Heart right ventricle (tissue), 16 donors: ENCODE measurements at regions of chr14 and their contacts with region 1.

Region 1: DNA sequence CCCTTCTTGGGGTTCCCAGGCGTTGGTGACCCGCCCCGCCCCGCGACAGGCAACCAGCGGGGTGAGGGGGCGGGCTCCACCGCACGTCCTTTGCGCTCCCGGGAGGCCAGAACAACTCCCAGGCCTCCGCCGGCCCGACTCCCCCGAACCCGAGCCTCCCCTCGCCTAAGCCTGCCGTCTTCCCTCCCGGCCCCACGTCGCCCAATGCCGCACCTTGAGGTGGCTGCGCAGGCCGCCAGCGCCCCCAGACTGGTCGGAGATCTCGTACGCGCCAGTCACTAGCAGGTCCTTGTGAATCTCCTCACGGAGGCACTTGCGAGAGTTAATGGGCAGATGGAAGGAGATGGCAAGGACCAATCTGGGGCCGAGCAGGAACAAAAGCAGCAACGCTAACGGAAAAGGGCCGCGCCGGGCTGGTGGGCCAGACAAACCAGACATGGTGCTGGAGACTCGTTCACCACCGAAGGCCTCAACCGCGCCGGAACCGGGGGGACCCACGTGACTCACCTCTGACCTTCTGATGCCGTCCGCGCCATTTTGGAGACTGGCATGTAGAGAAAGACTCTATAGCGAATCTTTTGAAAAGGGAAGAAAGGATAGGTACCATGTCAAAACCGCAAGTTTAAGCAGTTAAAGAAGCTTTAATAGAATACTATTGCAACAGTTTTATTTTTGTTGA is at the start of gene TMED10:
- DNase-seq: peak; percentile 88 to 91
- ATAC-seq: peak; percentile 95 to 99 (median 96)
- H3K4me3 ChIP-seq: peak within 1 kb of the TSS; percentile 34 to 99 (median 82)
- H3K27ac ChIP-seq: peak within 1 kb of the TSS; percentile 74 to 100 (median 94)
- H3K4me1 ChIP-seq: peaks cover 7 to 47% (median 25%) of the 10 kb centered on the region in 9 donors
- H3K27me3 ChIP-seq: no peaks in the 10 kb centered on the region
- CTCF ChIP-seq: peak in 3 of 9 donors; percentile 14 to 30 (median 26)
- total RNA-seq, gene TMED10: 219 to 366 (median 294) TPM

Region 2: GRCh38 chr14:74945823-74946682 is 230.2 kb before region 1 on chr14:
- intact Hi-C with region 1: no loop called
- DNase-seq: peak; percentile 76 to 83
- ATAC-seq: peak; percentile 74 to 86 (median 81)
- H3K4me3 ChIP-seq: peak overlapping the region in 3 of 10 donors; percentile 4 to 21 (median 17)
- H3K27ac ChIP-seq: peak overlapping the region in 7 of 10 donors; percentile 8 to 76 (median 54)
- H3K4me1 ChIP-seq: peaks cover 14 to 72% (median 44%) of the 10 kb centered on the region in 9 donors
- H3K27me3 ChIP-seq: peaks cover 0 to 4% (median 0%) of the 10 kb centered on the region in 7 donors
- CTCF ChIP-seq: peak; percentile 89 to 96 (median 95)

Region 3: GRCh38 chr14:75077794-75078193 is 98.5 kb before region 1 on chr14:
- intact Hi-C with region 1: no loop called
- DNase-seq: no peak
- ATAC-seq: no peak
- H3K4me3 ChIP-seq: no peak overlapping the region
- H3K27ac ChIP-seq: no peak overlapping the region
- H3K4me1 ChIP-seq: peaks cover 0 to 23% (median 5%) of the 10 kb centered on the region in 9 donors
- H3K27me3 ChIP-seq: no peaks in the 10 kb centered on the region
- CTCF ChIP-seq: no peak

Region 4: GRCh38 chr14:75126679-75127473 is 49.4 kb before region 1 on chr14 and contains the start of gene NEK9:
- intact Hi-C with region 1: loop called in 1 of 10 experiments (anchors 5 kb)
- DNase-seq: peak; percentile 91 to 94
- ATAC-seq: peak; percentile 95 to 98 (median 96)
- H3K4me3 ChIP-seq: peak within 1 kb of the TSS; percentile 63 to 96 (median 84)
- H3K27ac ChIP-seq: peak within 1 kb of the TSS; percentile 90 to 99 (median 96)
- H3K4me1 ChIP-seq: peaks cover 0 to 54% (median 41%) of the 10 kb centered on the region in 9 donors
- H3K27me3 ChIP-seq: no peaks in the 10 kb centered on the region
- CTCF ChIP-seq: peak in 1 of 9 donors; percentile 13
- total RNA-seq, gene NEK9: 97.8 to 138 (median 115) TPM

Region 5: DNA sequence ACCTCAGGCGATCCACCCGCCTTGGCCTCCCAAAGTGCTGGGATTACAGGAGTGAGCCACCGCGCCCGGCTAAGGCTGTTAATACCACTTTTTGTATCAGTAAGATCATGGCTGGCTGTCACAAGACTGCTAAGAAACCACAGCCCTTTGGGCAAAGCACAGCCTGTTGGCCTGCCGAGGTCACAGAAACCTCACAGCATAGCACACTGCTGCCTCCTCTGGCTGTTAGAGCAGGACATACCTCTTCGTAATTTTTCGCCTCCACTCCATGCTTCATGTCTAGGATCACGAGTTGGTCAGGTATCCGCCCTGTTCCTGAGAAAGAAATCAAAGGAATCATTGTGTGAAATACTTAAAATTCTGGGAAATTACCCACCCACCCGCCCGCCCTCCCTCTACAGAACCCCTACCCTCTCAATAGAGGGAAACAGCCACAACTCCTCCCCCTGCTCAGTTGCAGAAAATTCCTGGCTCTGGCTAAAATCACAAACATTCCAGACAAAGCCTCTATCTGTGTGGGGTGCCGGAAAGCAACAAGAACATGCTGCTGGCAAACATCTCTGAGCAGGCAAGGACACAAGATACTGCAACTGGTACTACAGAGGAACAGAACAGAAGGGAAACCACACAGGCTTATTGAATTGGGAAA is 28.7 kb before region 1 on chr14:
- intact Hi-C with region 1: loop called in 1 of 10 experiments (anchors 2 kb)
- DNase-seq: peak; percentile 53 to 74
- ATAC-seq: peak; percentile 79 to 94 (median 92)
- H3K4me3 ChIP-seq: peak overlapping the region in 1 of 10 donors; percentile 3
- H3K27ac ChIP-seq: peak overlapping the region; percentile 73 to 92 (median 84)
- H3K4me1 ChIP-seq: peaks cover 9 to 72% (median 49%) of the 10 kb centered on the region in 9 donors
- H3K27me3 ChIP-seq: no peaks in the 10 kb centered on the region
- CTCF ChIP-seq: peak; percentile 22 to 72 (median 51)

Region 6: GRCh38 chr14:75258615-75259466 is 82.6 kb after region 1 on chr14:
- intact Hi-C with region 1: loop called in 4 of 10 experiments (anchors 1 to 5 kb)
- DNase-seq: peak; percentile 99 to 100
- ATAC-seq: peak; percentile 95 to 98 (median 97)
- H3K4me3 ChIP-seq: peak overlapping the region in 9 of 10 donors; percentile 20 to 55 (median 47)
- H3K27ac ChIP-seq: peak overlapping the region; percentile 79 to 98 (median 95)
- H3K4me1 ChIP-seq: peaks cover 6 to 43% (median 33%) of the 10 kb centered on the region in 9 donors
- H3K27me3 ChIP-seq: no peaks in the 10 kb centered on the region
- CTCF ChIP-seq: no peak

Region 7: DNA sequence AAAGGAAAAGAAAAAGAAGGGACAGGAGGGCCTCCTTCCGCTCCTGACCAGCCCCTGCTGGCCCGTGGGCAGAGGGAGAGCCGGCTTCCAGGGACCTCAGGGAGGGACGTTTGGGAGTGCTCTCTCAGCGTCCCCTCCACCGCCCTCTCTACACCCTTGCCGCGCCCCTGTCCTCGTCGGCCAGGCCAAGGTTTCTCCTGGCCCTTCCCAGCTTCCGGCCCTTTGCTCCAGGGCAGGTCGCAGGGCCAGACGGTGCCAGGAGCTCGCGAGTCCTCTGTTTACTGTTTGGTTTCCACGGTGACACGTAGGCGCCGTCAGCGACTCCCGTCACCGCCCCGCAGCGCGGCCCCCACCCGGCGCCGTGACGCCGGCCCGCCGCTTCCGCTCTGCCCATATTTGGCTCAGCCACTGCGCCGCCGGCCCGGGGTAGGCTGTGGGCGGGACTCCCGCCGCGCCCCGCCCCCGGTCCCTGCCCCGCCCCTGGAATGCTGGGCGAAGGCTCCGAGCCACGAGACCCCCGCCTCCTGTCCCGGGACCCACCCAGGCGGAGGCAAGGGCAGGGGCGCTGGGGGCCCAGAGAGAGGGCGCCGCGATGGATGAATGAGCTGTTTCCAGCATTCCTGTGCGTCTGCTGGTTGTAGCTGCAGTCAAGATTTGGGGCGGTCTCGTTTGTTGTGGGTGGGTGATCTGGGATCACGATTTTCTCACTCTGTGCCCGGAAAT is 117.8 kb after region 1 on chr14:
- intact Hi-C with region 1: loop called in 3 of 10 experiments (anchors 1 to 2 kb)
- DNase-seq: peak; percentile 96 to 97
- ATAC-seq: peak; percentile 91 to 97 (median 94)
- H3K4me3 ChIP-seq: peak overlapping the region; percentile 26 to 80 (median 67)
- H3K27ac ChIP-seq: peak overlapping the region; percentile 82 to 99 (median 94)
- H3K4me1 ChIP-seq: peaks cover 5 to 53% (median 26%) of the 10 kb centered on the region in 9 donors
- H3K27me3 ChIP-seq: no peaks in the 10 kb centered on the region
- CTCF ChIP-seq: peak in 2 of 9 donors; percentile 25 to 28

Region 8: GRCh38 chr14:75440733-75441477 is 264.6 kb after region 1 on chr14:
- intact Hi-C with region 1: no loop called
- DNase-seq: peak; percentile 49 to 51
- ATAC-seq: peak; percentile 50 to 81 (median 70)
- H3K4me3 ChIP-seq: no peak overlapping the region
- H3K27ac ChIP-seq: peak overlapping the region in 8 of 10 donors; percentile 21 to 75 (median 62)
- H3K4me1 ChIP-seq: peaks cover 3 to 72% (median 56%) of the 10 kb centered on the region in 9 donors
- H3K27me3 ChIP-seq: no peaks in the 10 kb centered on the region
- CTCF ChIP-seq: no peak